GM23248 (cell line): ENCODE measurements at regions of chr17 and their contacts with region 1.

Region 1: GRCh38 chr17:43324205-43324893 is 74.4 kb upstream of the ARL4D start:
- DNase-seq: no peak
- H3K4me3 ChIP-seq: no peak overlapping the region
- H3K27ac ChIP-seq: no peak overlapping the region
- H3K4me1 ChIP-seq: peaks cover 16% of the 10 kb centered on the region
- H3K27me3 ChIP-seq: no peaks in the 10 kb centered on the region

Region 2: GRCh38 chr17:43024407-43025289 is 299.7 kb before region 1 on chr17 and contains the start of gene RND2:
- in situ Hi-C with region 1: loop called (anchors 25 kb)
- DNase-seq: peak; percentile 96
- H3K4me3 ChIP-seq: peak within 1 kb of the TSS; percentile 76
- H3K27ac ChIP-seq: no peak within 1 kb of the TSS
- H3K4me1 ChIP-seq: peaks cover 13% of the 10 kb centered on the region
- H3K27me3 ChIP-seq: no peaks in the 10 kb centered on the region
- total RNA-seq, gene RND2: 0.11 TPM in 1 of 2 replicates, not detected in the other

Region 3: DNA sequence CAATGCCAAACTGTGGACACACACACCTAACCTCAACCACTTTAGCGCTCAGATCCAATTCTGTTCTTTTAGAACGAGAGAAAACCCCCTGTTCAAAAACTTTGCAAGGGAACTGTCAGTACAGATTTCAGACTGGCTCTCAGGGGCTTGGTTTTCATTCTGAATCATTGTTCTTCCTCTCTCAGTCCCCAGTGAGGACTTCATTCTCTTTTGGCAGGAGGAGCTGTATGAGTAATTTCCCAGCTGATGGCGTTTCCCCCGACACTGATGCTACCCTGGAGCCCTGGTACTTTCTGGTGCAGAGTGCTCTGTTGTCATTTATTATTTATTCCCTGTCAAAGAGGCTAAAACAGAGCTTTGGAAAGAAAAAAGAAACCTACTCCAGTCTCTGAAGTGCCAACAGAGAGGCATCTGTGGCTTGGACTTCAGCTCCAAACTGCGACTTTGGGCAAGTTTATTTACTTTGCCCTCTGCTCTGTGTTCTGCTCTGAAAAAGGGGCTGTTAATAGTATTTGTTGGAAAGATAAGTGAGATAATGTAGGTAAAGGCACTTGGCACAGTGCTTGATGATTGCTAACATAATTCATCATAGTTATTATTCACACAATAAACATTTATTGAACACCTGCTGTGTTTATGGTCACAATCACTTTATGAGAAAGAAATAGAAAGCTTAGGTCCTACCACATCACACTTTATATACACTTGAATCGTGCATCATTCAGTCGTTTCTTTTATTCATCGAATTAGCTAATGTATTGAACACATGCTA is 193.5 kb after region 1 on chr17:
- in situ Hi-C with region 1: no loop called
- DNase-seq: peak; percentile 85
- H3K4me3 ChIP-seq: no peak overlapping the region
- H3K27ac ChIP-seq: peak overlapping the region; percentile 63
- H3K4me1 ChIP-seq: peaks cover 14% of the 10 kb centered on the region
- H3K27me3 ChIP-seq: no peaks in the 10 kb centered on the region